CD4-positive, alpha-beta memory T cell (primary cell): ENCODE measurements at regions of chr6 and their contacts with region 1.

Region 1: DNA sequence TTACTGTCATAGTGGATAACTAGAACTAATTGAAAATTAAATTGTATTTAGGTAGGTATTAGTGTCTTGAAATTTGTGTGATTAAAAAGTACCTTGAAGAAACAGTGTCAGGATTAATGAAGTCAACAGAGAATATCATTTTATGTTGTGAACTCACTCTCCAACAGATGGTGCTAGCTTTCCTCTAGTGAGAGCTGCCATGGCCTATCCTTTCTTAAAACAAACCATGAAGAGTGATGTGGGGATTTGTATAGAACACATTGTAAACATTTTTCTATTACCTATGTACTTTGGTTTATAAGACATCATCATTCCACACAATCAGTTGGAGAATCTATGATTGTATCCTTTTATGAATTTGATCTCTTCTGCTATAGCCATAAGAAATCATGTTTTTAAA is 4.8 kb upstream of the SRSF12 start:
- DNase-seq: peak in 3 of 5 donors; percentile 15 to 26 (median 19)
- H3K4me3 ChIP-seq: no peak overlapping the region
- H3K4me3 Mint-ChIP-seq: no peak overlapping the region
- H3K27ac ChIP-seq: no peak overlapping the region
- H3K27ac Mint-ChIP-seq: no peak overlapping the region
- H3K4me1 ChIP-seq: no peaks in the 10 kb centered on the region
- H3K4me1 Mint-ChIP-seq: peaks cover 1 to 8% (median 5%) of the 10 kb centered on the region in 4 donors
- H3K27me3 ChIP-seq: no peaks in the 10 kb centered on the region
- H3K27me3 Mint-ChIP-seq: no peaks in the 10 kb centered on the region

Region 2: GRCh38 chr6:89242574-89243330 is 120.1 kb after region 1 on chr6:
- CTCF ChIA-PET with region 1: no interaction called
- POLR2A ChIA-PET with region 1: no interaction called
- intact Hi-C with region 1: loop called (anchors 5 kb)
- DNase-seq: peak in 4 of 5 donors; percentile 16 to 30 (median 24)
- H3K4me3 ChIP-seq: no peak overlapping the region
- H3K4me3 Mint-ChIP-seq: no peak overlapping the region
- H3K27ac ChIP-seq: no peak overlapping the region
- H3K27ac Mint-ChIP-seq: no peak overlapping the region
- H3K4me1 ChIP-seq: peaks cover 10% of the 10 kb centered on the region
- H3K4me1 Mint-ChIP-seq: peaks cover 9 to 16% (median 12%) of the 10 kb centered on the region in 4 donors
- H3K27me3 ChIP-seq: peaks cover 5% of the 10 kb centered on the region
- H3K27me3 Mint-ChIP-seq: peaks cover 2 to 4% of the 10 kb centered on the region in 2 donors

Region 3: DNA sequence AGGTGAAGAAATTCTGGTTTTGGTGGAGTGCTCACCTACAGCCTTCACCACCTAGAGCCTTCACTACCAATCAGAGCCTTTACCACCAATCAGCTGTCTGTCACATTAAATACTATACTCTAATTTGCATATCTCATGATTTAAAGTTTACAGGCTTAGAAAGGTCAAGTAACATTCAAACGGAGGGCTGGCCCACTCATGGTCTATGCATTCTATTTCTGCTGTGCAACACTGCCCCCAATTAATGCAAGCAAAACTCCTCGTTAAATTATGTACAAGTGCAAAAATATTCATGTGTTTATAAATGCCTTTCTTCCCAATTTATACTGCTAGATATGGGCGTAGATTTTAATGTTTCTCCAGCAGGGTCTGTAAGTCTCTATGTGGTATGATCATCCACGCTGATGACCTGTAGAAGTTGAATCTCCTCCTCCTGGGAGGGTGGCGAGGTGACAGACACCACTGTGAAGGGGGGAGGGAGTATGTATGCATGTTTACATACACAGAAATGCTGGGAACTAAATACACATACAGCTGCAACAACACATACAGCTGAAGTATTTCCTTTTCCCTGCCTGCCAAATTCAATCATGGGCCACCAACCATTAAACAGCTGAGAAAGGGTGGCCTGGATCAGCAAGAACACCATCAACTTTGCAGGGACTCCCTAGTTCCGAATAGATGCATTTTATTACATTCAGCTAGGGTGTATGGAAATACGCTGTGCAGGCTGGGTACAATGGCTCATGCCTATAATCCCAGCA is 276.3 kb after region 1 on chr6:
- CTCF ChIA-PET with region 1: no interaction called
- POLR2A ChIA-PET with region 1: no interaction called
- intact Hi-C with region 1: no loop called
- DNase-seq: no peak
- H3K4me3 ChIP-seq: no peak overlapping the region
- H3K4me3 Mint-ChIP-seq: no peak overlapping the region
- H3K27ac ChIP-seq: no peak overlapping the region
- H3K27ac Mint-ChIP-seq: no peak overlapping the region
- H3K4me1 ChIP-seq: no peaks in the 10 kb centered on the region
- H3K4me1 Mint-ChIP-seq: no peaks in the 10 kb centered on the region
- H3K27me3 ChIP-seq: no peaks in the 10 kb centered on the region
- H3K27me3 Mint-ChIP-seq: no peaks in the 10 kb centered on the region